Activated B cell treated with CpG ODN at 0.5 μM for 24 hours (primary cell): ENCODE measurements at regions of chr12 and their contacts with region 1.

Region 1: GRCh38 chr12:24378548-24379407 is 429.3 kb upstream of the SOX5 start:
- DNase-seq: peak; percentile 26
- ATAC-seq: peak; percentile 76
- H3K4me3 Mint-ChIP-seq: peak overlapping the region; percentile 84
- H3K27ac Mint-ChIP-seq: peak overlapping the region; percentile 95
- H3K4me1 Mint-ChIP-seq: peaks cover 40% of the 10 kb centered on the region
- H3K27me3 Mint-ChIP-seq: no peaks in the 10 kb centered on the region
- CTCF ChIP-seq: no peak

Region 2: GRCh38 chr12:24398605-24399004 is 19.8 kb after region 1 on chr12:
- CTCF ChIA-PET with region 1: no interaction called
- POLR2A ChIA-PET with region 1: interaction called, 12 read pairs
- intact Hi-C with region 1: loop called (anchors 2 kb)
- DNase-seq: no peak
- ATAC-seq: peak; percentile 89
- H3K4me3 Mint-ChIP-seq: peak overlapping the region; percentile 68
- H3K27ac Mint-ChIP-seq: peak overlapping the region; percentile 57
- H3K4me1 Mint-ChIP-seq: peaks cover 18% of the 10 kb centered on the region
- H3K27me3 Mint-ChIP-seq: no peaks in the 10 kb centered on the region
- CTCF ChIP-seq: no peak

Region 3: GRCh38 chr12:24561882-24562760 is 183.3 kb after region 1 on chr12:
- CTCF ChIA-PET with region 1: no interaction called
- POLR2A ChIA-PET with region 1: interaction called, 13 read pairs
- intact Hi-C with region 1: loop called (anchors 2 kb)
- DNase-seq: peak; percentile 46
- ATAC-seq: peak; percentile 55
- H3K4me3 Mint-ChIP-seq: peak overlapping the region; percentile 87
- H3K27ac Mint-ChIP-seq: peak overlapping the region; percentile 76
- H3K4me1 Mint-ChIP-seq: peaks cover 28% of the 10 kb centered on the region
- H3K27me3 Mint-ChIP-seq: peaks cover 23% of the 10 kb centered on the region
- CTCF ChIP-seq: no peak

Region 4: DNA sequence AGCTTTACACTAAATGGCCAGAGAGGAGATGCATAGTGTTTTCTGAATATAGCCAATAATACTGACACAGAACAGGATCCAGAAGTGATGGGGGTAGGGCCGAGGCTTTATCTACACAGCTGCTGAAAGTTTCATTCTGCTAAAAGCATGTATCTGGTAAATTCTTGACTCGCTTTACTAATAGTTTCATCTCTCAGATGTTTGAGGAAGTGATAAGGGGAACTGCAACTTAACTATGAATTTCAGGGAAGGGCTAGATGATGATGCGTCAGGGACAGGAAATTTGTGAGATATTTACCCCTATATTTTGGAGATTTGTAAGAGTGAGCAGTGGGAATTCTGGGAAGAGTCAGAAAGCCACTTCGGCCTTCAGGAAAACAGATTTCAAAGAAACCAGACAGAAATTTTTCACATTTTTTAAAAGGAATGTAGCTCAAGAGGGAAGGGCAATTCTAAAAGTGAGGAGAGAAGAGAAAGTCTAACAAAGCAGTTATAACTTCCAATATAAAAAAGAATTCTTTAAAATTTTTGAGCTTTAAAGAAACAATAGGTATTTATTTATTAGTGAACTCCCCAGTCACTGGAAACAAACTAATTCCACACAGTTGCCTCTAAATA is 327.1 kb after region 1 on chr12:
- CTCF ChIA-PET with region 1: no interaction called
- POLR2A ChIA-PET with region 1: interaction called, 5 read pairs
- intact Hi-C with region 1: loop called (anchors 5 kb)
- DNase-seq: no peak
- ATAC-seq: peak; percentile 91
- H3K4me3 Mint-ChIP-seq: peak overlapping the region; percentile 66
- H3K27ac Mint-ChIP-seq: peak overlapping the region; percentile 81
- H3K4me1 Mint-ChIP-seq: peaks cover 51% of the 10 kb centered on the region
- H3K27me3 Mint-ChIP-seq: no peaks in the 10 kb centered on the region
- CTCF ChIP-seq: no peak